ENCODE measurements at regions of chr6 and their contacts with region 1.

Region 1: GRCh38 chr6:34425498-34426410 is at the start of gene RPS10:
- DNase-seq: peak; percentile 98
- total RNA-seq, gene RPS10: 542 TPM

Region 2: DNA sequence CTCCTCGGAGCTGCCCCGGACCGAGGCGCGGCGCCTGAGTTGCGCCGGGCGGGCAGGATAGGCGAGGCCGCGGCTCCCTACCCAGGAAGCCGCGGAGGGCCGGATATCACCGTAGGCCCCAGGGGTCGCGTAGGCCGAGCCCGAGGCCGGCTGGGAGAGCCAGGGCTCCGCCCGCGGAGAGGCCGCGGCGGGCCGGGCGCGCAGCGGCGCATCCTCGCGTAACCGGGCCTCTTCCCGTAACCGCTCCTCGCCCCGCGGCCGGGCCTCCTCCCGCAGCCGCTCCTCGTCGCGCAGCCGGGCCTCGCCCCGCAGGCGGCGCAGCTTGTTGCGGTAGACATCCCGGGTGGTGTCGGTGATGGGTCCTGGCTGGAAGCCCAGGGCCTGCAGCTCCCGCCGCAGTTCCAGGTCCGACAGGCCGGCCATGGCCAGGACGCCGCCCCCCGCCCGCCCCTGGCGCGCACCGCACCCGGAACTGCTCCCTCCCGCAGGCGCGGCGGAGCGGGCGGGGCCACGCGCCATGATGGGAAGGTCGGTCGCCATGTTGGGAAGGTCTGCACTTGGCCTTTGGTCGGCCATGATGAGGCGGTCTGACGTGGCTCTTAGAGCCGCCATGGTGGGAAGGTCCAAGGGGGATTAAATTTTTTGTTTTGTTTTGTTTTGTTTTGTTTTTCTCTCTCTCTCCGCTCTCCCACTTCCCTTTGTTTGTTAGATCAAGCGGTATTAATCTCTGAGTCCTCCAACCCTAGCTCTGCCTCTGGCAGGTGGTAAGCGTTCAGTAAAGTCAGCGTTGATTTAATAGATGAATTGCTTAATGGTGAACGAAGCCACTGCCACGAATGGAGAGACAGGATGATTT is 636.8 kb before region 1 on chr6 and contains the start of gene LEMD2:
- intact Hi-C with region 1: loop called (anchors 5 kb)
- DNase-seq: peak; percentile 98
- total RNA-seq, gene LEMD2: 29.6 TPM

Region 3: GRCh38 chr6:33983105-33983716 is 442.5 kb before region 1 on chr6:
- intact Hi-C with region 1: no loop called
- DNase-seq: peak; percentile 71

Region 4: GRCh38 chr6:34602318-34603111 is 176.8 kb after region 1 on chr6:
- intact Hi-C with region 1: no loop called
- DNase-seq: no peak

Measured in cardiac septum (tissue), 1 donor.